Activated CD4-positive, alpha-beta T cell treated with anti-CD3 and anti-CD28 coated beads for 36 hours (primary cell): ENCODE measurements at regions of chr17 and their contacts with region 1.

Region 1: GRCh38 chr17:58006924-58007780 is at the start of gene SRSF1:
- DNase-seq: peak; percentile 99
- ATAC-seq: peak; percentile 90
- H3K4me3 Mint-ChIP-seq: peak within 1 kb of the TSS; percentile 100
- H3K27ac Mint-ChIP-seq: peak within 1 kb of the TSS; percentile 100
- H3K4me1 Mint-ChIP-seq: peaks cover 35% of the 10 kb centered on the region
- H3K27me3 Mint-ChIP-seq: no peaks in the 10 kb centered on the region
- total RNA-seq, gene SRSF1: 271 to 368 TPM

Region 2: GRCh38 chr17:57084802-57085447 is 922.2 kb before region 1 on chr17 and contains the start of gene AKAP1:
- CTCF ChIA-PET with region 1: no interaction called
- POLR2A ChIA-PET with region 1: no interaction called
- intact Hi-C with region 1: loop called in 1 of 2 experiments (anchors 1 kb)
- DNase-seq: peak; percentile 97
- ATAC-seq: peak; percentile 96
- H3K4me3 Mint-ChIP-seq: peak within 1 kb of the TSS; percentile 81
- H3K27ac Mint-ChIP-seq: peak within 1 kb of the TSS; percentile 87
- H3K4me1 Mint-ChIP-seq: peaks cover 44% of the 10 kb centered on the region
- H3K27me3 Mint-ChIP-seq: no peaks in the 10 kb centered on the region
- total RNA-seq, gene AKAP1: 27.0 to 29.8 TPM

Region 3: DNA sequence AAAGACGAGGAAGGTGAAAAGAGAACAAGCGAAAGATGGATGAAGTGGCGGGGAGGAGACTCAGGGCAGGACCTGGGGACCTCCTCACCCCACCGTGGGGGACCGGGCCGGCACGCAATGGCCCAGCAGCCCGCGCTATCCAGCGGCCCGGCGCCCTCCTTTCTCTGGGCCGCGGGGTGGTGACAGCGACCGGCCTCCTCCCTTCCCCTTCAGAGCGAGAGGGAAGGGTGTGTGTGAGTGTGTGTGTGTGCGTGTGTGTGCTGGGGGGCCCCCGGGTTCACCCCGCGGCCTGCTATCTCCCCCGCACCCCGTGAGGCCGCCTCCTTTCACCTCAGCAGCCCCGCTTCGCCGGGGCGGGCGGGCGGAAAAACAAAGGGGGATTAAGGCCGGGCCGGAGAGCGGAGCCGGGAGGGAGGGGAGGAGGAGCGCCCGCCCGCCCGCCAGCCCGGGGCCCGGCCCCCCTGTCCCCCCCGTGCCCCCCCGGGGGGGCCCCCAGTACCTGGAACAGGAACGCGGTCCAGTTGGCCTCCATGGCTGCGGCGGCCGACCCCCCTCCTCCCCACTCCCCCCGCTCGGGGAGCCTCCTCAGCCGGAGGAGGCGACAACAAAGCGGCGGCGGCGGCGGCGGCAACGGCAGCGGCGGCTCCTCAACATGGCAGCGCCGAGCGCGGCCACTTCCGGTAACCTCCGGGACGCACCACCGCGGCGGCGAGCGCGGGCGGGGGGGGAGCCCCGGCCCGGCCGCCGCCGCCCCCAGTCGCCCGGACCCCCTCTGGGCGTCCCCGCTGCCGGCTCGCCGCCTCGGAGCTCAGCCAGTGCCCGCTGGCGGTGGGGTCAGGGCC is 19.4 kb before region 1 on chr17 and contains the start of gene VEZF1:
- CTCF ChIA-PET with region 1: interaction called, 93 read pairs
- POLR2A ChIA-PET with region 1: interaction called, 8 read pairs
- intact Hi-C with region 1: loop called (anchors 1 kb)
- DNase-seq: peak; percentile 88
- ATAC-seq: peak; percentile 68
- H3K4me3 Mint-ChIP-seq: peak within 1 kb of the TSS; percentile 89
- H3K27ac Mint-ChIP-seq: peak within 1 kb of the TSS; percentile 95
- H3K4me1 Mint-ChIP-seq: peaks cover 56% of the 10 kb centered on the region
- H3K27me3 Mint-ChIP-seq: no peaks in the 10 kb centered on the region
- total RNA-seq, gene VEZF1: 21.3 to 26.3 TPM

Region 4: DNA sequence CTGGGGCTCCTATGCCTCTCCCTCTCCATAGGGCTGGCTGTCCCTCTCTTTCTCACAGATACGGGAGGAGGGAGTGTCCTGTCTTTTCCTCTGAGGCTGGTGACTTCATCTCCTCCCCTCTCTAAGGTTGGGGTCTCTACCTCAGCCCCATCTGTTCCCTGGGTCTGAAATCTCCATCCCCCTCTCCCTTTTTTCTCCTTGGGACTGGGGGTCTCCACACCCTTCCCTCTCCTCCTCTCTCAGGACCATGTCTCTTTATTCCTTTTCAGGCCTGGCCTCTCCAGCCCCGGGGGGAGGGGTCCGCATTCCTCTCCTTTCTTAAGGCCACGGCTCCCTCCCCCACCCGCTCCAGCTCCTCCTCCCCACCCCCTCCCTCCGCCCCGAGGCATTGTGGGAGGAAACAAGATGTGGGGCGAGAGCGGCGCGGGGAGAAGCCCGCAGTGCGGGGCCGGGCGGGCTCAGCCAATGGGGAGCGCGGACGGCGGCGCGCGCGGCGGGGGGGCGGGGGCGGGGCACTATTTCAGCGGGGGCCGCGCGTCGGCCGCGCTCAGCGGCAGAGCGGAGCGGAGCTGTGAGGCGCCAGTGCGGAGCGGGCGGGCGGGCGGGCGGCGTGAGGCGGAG is 75.8 kb after region 1 on chr17 and contains the start of gene DYNLL2:
- CTCF ChIA-PET with region 1: interaction called, 4 read pairs
- POLR2A ChIA-PET with region 1: interaction called, 17 read pairs
- intact Hi-C with region 1: loop called (anchors 1 kb)
- DNase-seq: peak; percentile 95
- ATAC-seq: peak; percentile 89
- H3K4me3 Mint-ChIP-seq: peak within 1 kb of the TSS; percentile 83
- H3K27ac Mint-ChIP-seq: peak within 1 kb of the TSS; percentile 79
- H3K4me1 Mint-ChIP-seq: peaks cover 35% of the 10 kb centered on the region
- H3K27me3 Mint-ChIP-seq: no peaks in the 10 kb centered on the region
- total RNA-seq, gene DYNLL2: 21.3 to 28.3 TPM

Region 5: DNA sequence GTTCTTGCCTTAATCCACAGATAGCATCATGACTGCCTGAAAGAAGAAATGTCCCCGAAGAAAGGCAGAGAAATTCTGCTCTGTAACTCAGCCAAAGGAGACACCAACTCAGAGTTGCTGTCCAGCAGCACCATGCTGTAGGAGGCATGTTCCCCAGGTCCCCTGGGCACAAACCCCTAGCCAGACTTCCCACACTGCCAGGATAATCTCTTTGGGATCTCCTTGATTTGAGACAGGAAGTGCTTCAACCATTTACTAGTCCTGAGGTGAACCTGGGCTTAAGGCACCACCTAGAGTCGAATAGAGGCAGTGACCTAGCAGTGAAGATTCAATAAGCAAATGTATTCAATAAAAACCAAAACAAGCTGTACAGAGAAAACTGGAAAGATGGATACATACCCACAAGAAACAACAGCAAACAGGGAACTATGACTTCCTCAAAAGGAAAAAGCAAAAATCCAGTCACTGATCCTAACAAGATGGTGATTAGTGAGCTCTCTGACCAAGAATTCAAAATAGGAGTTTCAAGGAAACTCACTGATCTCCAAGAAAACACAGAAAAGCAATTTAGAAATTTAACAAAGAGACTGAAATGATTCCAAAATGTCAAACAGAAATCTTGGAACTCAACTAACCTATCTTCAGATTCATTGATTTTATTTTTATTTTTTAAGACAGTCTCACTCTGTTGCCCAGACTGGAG is 165.4 kb after region 1 on chr17:
- CTCF ChIA-PET with region 1: interaction called, 6 read pairs
- POLR2A ChIA-PET with region 1: interaction called, 3 read pairs
- intact Hi-C with region 1: loop called in 1 of 2 experiments (anchors 1 kb)
- DNase-seq: peak; percentile 56
- ATAC-seq: peak; percentile 96
- H3K4me3 Mint-ChIP-seq: no peak overlapping the region
- H3K27ac Mint-ChIP-seq: peak overlapping the region; percentile 38
- H3K4me1 Mint-ChIP-seq: peaks cover 40% of the 10 kb centered on the region
- H3K27me3 Mint-ChIP-seq: no peaks in the 10 kb centered on the region

Region 6: GRCh38 chr17:58337600-58338453 is 330.7 kb after region 1 on chr17:
- CTCF ChIA-PET with region 1: no interaction called
- POLR2A ChIA-PET with region 1: no interaction called
- intact Hi-C with region 1: loop called in 1 of 2 experiments (anchors 5 kb)
- DNase-seq: peak; percentile 97
- ATAC-seq: peak; percentile 57
- H3K4me3 Mint-ChIP-seq: peak overlapping the region; percentile 100
- H3K27ac Mint-ChIP-seq: peak overlapping the region; percentile 99
- H3K4me1 Mint-ChIP-seq: peaks cover 26% of the 10 kb centered on the region
- H3K27me3 Mint-ChIP-seq: no peaks in the 10 kb centered on the region

Region 7: DNA sequence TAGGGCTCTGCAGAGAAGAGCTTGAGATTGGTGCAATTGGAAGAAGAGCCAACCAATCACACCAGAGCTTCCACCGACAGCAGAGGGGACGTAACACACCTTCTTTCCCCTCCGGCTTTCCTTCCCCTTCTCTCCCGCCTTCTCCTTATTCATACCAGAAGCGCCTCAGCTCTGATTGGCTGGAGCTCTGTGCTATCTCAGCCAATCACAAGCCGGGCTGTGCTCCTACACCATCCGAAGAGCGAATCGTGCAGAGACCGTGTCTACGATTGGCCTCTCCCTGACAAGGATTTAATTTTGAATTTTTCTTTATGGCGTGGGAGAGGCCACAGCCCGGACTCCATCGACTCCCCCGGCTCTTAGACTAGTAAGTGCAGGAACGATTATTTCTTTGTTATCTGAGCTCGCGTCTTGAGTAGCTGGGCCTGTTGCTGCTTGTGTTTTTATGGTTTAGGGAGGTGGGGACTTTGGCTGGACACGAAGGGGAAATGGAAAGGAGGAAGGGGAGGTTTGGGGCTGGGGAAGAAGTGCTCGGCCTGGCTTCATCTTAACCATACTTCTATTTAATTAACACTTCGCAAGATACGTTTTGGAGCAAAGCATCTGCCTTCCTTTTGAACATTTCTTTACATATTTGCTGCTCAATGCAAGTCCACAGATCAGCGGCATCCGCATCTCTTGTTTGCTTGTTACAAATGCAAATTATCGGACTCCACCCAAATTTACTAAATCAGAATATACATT is 1148.5 kb after region 1 on chr17 and contains the start of gene PRR11:
- CTCF ChIA-PET with region 1: interaction called, 3 read pairs
- POLR2A ChIA-PET with region 1: no interaction called
- intact Hi-C with region 1: loop called in 1 of 2 experiments (anchors 2 kb)
- DNase-seq: peak; percentile 96
- ATAC-seq: peak; percentile 89
- H3K4me3 Mint-ChIP-seq: no peak within 1 kb of the TSS
- H3K27ac Mint-ChIP-seq: no peak within 1 kb of the TSS
- H3K4me1 Mint-ChIP-seq: peaks cover 37% of the 10 kb centered on the region
- H3K27me3 Mint-ChIP-seq: no peaks in the 10 kb centered on the region
- total RNA-seq, gene PRR11: 73.6 to 95.9 TPM